Heart right ventricle (tissue), 16 donors: ENCODE measurements at regions of chr17 and their contacts with region 1.

Region 1: DNA sequence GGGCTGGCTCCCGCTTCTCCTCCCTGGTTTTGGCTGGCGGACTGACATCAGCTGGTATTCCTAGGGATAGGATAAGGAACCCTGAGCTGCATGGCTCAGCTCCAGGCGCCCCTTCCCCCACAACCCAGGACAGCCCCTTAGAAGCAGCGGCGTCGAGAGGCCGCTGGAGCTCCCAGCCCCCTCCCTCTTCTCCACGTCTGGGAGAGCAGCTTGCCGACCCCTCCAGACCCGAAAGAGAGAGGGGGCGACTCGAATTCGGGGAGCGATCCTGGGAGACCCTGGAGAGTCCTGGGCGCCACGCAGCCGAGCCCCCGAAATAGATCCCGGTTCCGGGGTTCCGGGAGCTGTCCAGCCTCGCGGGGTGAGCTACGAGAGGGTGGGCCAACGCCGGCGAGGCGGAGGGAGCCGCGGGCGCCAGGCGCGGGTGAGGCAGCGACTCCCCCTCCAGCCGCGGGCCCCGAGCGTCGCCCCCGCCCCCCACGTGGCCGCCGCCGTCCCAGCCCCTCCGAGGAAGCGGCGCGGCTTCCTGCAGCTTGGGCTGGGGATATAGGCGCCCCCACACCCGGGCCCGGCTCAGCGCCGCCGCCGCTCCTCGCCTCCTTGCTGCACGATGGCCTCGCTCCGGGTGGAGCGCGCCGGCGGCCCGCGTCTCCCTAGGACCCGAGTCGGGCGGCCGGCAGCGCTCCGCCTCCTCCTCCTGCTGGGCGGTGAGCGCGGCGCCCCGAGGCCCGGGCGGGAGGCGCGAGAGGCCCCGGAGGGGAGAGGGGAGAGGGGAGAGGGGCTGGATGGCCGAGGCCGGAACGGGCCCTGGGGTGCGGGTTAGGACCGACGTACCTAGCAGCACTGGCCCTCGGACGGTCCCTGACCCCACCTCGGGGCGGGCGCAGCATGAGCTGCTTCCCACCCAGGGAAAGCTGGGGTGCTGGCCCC is at the start of gene RAMP2:
- DNase-seq: peak; percentile 42 to 55
- ATAC-seq: peak; percentile 28 to 70 (median 55)
- H3K4me3 ChIP-seq: peak within 1 kb of the TSS; percentile 43 to 87 (median 70)
- H3K27ac ChIP-seq: peak within 1 kb of the TSS; percentile 81 to 97 (median 93)
- H3K4me1 ChIP-seq: peaks cover 5 to 57% (median 26%) of the 10 kb centered on the region in 9 donors
- H3K27me3 ChIP-seq: peaks cover 0 to 38% (median 7%) of the 10 kb centered on the region in 7 donors
- CTCF ChIP-seq: peak in 2 of 9 donors; percentile 7 to 8
- total RNA-seq, gene RAMP2: 32.1 to 54.8 (median 38.2) TPM

Region 2: DNA sequence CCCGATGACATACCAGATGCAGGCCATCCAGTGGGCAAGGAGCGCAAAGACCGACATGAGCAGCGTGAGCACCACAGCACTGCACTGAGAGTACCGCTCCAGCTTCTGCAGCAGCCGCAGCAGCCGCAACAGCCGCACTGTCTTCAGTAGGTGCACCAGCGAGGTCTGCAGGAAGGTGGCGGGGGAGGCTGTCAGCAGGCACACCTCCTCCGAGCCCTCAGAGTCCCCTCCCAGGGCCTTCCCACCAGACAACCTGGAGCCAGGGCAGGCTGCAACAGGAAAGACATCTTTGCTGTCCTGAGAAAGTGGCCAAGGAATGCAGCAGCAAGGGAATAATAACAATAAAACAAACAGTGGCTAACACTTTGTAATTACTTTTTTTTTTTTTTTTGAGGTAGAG is 589.1 kb before region 1 on chr17:
- intact Hi-C with region 1: no loop called
- DNase-seq: no peak
- ATAC-seq: peak in 5 of 8 donors; percentile 34 to 65 (median 43)
- H3K4me3 ChIP-seq: no peak overlapping the region
- H3K27ac ChIP-seq: no peak overlapping the region
- H3K4me1 ChIP-seq: no peaks in the 10 kb centered on the region
- H3K27me3 ChIP-seq: no peaks in the 10 kb centered on the region
- CTCF ChIP-seq: no peak

Region 3: DNA sequence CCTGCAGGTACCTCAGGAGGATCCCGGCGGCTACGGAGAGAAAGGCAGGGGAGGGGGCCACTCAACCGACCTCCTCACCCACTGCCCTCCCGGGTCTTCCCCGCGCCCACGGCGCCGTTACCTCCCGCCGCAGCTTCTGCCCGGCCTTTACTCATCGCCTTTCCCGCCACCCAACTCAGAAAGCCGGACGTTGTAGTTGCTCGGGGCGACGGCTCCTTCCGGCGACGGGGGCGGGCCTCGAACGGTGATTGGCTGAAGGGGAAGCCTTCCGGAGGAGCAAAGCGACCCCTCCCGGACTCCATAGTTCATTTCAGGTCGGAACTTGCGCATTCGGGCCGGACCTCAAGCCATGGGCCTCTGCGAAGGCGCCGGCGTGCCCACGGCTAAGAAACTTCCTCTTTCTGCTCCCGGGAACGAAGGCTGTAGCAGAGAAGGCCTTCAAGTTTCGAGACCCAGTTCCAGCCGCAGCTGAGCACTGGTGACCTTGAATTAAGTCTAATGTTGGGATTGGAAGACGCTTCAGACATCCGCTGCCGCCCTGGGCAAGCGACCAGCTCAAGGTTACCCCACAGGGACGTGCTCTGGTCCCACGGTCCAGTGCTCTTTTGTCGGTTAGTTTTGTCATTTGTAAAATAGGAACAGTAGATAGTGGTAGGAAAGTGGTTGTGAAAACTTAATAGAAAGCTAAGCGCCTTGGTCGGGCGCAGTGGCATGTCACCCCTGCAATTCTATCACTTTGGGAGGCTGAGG is 183.2 kb before region 1 on chr17 and contains the start of gene PSMC3IP:
- intact Hi-C with region 1: loop called in 2 of 10 experiments (anchors 5 to 10 kb)
- DNase-seq: peak; percentile 95 to 97
- ATAC-seq: peak; percentile 92 to 98 (median 96)
- H3K4me3 ChIP-seq: peak within 1 kb of the TSS; percentile 48 to 86 (median 69)
- H3K27ac ChIP-seq: peak within 1 kb of the TSS; percentile 33 to 96 (median 94)
- H3K4me1 ChIP-seq: peaks cover 10 to 46% (median 23%) of the 10 kb centered on the region in 9 donors
- H3K27me3 ChIP-seq: no peaks in the 10 kb centered on the region
- CTCF ChIP-seq: peak in 7 of 9 donors; percentile 19 to 59 (median 43)
- total RNA-seq, gene PSMC3IP: 1.1 to 3.1 (median 1.6) TPM

Region 4: GRCh38 chr17:42744806-42745617 is 15.9 kb before region 1 on chr17 and contains the start of gene EZH1:
- intact Hi-C with region 1: loop called in 2 of 10 experiments (anchors 1 to 2 kb)
- DNase-seq: peak; percentile 89 to 94
- ATAC-seq: peak; percentile 94 to 98 (median 98)
- H3K4me3 ChIP-seq: peak within 1 kb of the TSS; percentile 56 to 90 (median 78)
- H3K27ac ChIP-seq: peak within 1 kb of the TSS; percentile 74 to 97 (median 94)
- H3K4me1 ChIP-seq: peaks cover 13 to 56% (median 48%) of the 10 kb centered on the region in 9 donors
- H3K27me3 ChIP-seq: peaks cover 0 to 6% (median 0%) of the 10 kb centered on the region in 7 donors
- CTCF ChIP-seq: no peak
- total RNA-seq, gene EZH1: 31.7 to 50.5 (median 46.3) TPM

Region 5: DNA sequence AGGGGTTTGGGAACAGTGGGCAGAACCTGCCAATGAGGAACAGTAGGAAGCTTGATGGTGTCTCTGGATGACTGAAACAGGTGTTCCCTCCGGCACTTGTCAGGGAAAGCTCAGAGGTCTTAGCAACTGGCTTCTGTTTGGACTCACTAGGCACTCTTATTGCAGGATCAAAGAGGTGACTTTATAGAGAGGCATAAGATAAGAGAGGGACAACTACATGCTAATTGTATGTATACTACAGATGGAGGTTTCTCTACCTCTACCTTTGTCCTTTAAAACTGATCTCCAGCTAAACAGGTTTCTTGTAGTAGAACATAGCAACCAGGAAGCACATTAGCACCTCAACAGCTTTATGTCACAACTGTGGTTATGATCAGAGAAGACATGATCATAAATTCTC is 45.3 kb after region 1 on chr17:
- intact Hi-C with region 1: loop called in 1 of 10 experiments (anchors 2 kb)
- DNase-seq: no peak
- ATAC-seq: no peak
- H3K4me3 ChIP-seq: no peak overlapping the region
- H3K27ac ChIP-seq: no peak overlapping the region
- H3K4me1 ChIP-seq: no peaks in the 10 kb centered on the region
- H3K27me3 ChIP-seq: no peaks in the 10 kb centered on the region
- CTCF ChIP-seq: no peak

Region 6: GRCh38 chr17:42843358-42843934 is 82.5 kb after region 1 on chr17:
- intact Hi-C with region 1: no loop called
- DNase-seq: peak in 1 of 2 donors; percentile 58
- ATAC-seq: peak; percentile 56 to 87 (median 78)
- H3K4me3 ChIP-seq: no peak overlapping the region
- H3K27ac ChIP-seq: peak overlapping the region in 1 of 10 donors; percentile 12
- H3K4me1 ChIP-seq: peaks cover 0 to 22% (median 0%) of the 10 kb centered on the region in 9 donors
- H3K27me3 ChIP-seq: no peaks in the 10 kb centered on the region
- CTCF ChIP-seq: peak in 8 of 9 donors; percentile 71 to 96 (median 92)